Thyroid gland (tissue), 4 donors: ENCODE measurements at regions of chr1 and their contacts with region 1.

Region 1: GRCh38 chr1:42698081-42698813 is 16.0 kb downstream of the YBX1 start:
- DNase-seq: no peak
- H3K4me3 ChIP-seq: no peak overlapping the region
- H3K27ac ChIP-seq: no peak overlapping the region
- H3K4me1 ChIP-seq: peaks cover 0 to 10% of the 10 kb centered on the region in 2 donors
- H3K27me3 ChIP-seq: no peaks in the 10 kb centered on the region
- CTCF ChIP-seq: no peak
- POLR2A ChIP-seq: no peak

Region 2: DNA sequence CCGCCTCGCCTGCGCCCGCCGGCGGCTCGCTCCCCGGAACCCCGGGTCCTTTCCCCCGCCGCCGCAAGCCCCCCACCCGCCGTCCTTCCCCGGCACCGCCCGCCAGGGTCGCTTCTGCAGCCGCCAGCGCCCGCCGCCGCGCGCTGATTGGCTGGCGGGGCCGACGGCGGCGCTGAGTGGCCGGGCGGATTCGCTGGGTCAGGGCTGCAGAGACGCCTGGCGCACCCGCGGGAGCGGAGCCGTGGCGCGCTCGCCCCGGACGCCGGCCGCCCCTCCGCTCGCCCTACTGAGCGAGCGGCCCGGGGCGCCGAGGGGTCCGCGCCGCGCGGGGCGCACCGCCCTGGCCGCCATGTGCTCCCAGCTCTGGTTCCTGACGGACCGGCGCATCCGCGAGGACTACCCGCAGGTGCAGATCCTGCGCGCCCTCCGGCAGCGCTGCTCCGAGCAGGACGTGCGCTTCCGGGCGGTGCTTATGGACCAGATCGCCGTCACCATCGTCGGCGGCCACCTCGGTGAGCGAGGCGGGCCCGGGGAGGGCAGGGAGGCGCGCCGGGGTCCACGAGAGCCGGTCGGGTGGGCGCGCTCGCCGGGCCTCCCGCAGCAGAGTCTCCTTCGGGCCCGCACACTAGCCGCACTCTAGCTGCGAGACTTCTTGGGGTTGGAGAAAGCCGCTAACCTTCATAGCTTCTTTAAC is 317.5 kb before region 1 on chr1 and contains the start of gene RIMKLA:
- intact Hi-C with region 1: no loop called
- DNase-seq: peak; percentile 62
- H3K4me3 ChIP-seq: peak within 1 kb of the TSS; percentile 30 to 48 (median 39)
- H3K27ac ChIP-seq: no peak within 1 kb of the TSS
- H3K4me1 ChIP-seq: peaks cover 6 to 10% of the 10 kb centered on the region in 2 donors
- H3K27me3 ChIP-seq: peaks cover 4% of the 10 kb centered on the region
- CTCF ChIP-seq: no peak
- POLR2A ChIP-seq: peak in 1 of 2 donors; percentile 76
- total RNA-seq, gene RIMKLA: 0.67 to 2.6 (median 2.2) TPM

Region 3: DNA sequence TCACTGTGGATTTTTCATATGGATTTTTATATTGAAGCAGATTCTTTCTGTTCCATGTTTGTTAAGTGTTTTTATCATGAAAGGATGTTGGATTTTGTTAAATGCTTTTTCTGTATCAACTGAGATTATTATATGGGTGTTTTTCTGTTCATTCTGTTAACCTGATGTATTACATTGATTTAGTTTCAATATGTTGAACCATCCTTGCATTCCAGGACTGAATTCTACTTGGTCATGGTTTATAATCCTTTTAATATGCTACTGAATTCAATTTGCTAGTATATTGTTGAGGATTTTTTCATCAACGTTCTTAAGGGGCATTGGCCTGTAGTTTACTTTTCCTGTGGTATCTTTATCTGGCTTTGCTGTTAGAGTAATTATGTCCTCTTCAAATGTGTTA is 179.3 kb before region 1 on chr1:
- intact Hi-C with region 1: no loop called
- DNase-seq: no peak
- H3K4me3 ChIP-seq: no peak overlapping the region
- H3K27ac ChIP-seq: no peak overlapping the region
- H3K4me1 ChIP-seq: no peaks in the 10 kb centered on the region
- H3K27me3 ChIP-seq: no peaks in the 10 kb centered on the region
- CTCF ChIP-seq: no peak
- POLR2A ChIP-seq: no peak

Region 4: DNA sequence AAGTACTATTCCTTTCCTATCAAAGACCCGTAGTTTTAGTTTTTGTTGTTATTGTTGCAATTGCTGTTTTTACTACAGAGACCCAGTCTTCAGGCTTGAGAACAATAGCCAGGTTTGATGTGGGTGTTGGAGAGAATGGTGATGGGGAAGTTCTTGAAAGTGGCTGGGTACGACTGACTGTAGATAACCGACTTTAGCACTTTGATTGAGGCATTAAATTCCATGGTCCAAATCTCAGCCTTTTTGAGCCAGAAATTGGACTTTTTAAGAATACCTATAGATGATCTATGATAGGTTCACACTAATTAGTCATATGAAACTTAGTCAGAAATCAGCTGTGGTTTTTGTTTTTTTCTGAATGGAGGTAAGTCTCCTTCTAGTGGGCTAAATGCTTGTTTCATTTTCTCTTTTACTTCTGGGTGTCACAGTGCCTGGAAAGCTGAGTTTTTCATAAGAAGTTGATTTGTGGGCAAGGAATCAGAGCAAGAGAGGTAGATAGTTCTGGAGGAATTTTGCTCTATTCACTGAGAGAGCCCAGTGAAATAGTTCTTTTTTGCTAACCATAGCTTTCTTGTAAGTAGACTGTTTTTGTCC is 37.2 kb before region 1 on chr1:
- intact Hi-C with region 1: loop called (anchors 5 kb)
- DNase-seq: no peak
- H3K4me3 ChIP-seq: no peak overlapping the region
- H3K27ac ChIP-seq: no peak overlapping the region
- H3K4me1 ChIP-seq: peaks cover 11 to 12% of the 10 kb centered on the region in 2 donors
- H3K27me3 ChIP-seq: no peaks in the 10 kb centered on the region
- CTCF ChIP-seq: no peak
- POLR2A ChIP-seq: no peak